PC-3 (cell line): ENCODE measurements at regions of chr15 and their contacts with region 1.

Region 1: GRCh38 chr15:70505411-70505919 is 257.9 kb downstream of the UACA start:
- DNase-seq: peak; percentile 95
- ATAC-seq: peak; percentile 56
- H3K4me3 ChIP-seq: no peak overlapping the region
- H3K27ac ChIP-seq: peak overlapping the region; percentile 90
- H3K4me1 ChIP-seq: peaks cover 57% of the 10 kb centered on the region
- H3K27me3 ChIP-seq: no peaks in the 10 kb centered on the region
- CTCF ChIP-seq: no peak

Region 2: GRCh38 chr15:70474471-70475396 is 30.7 kb before region 1 on chr15:
- CTCF ChIA-PET with region 1: no interaction called
- POLR2A ChIA-PET with region 1: no interaction called
- intact Hi-C with region 1: loop called (anchors 2 kb)
- DNase-seq: peak; percentile 94
- ATAC-seq: peak; percentile 85
- H3K4me3 ChIP-seq: peak overlapping the region; percentile 55
- H3K27ac ChIP-seq: peak overlapping the region; percentile 93
- H3K4me1 ChIP-seq: peaks cover 30% of the 10 kb centered on the region
- H3K27me3 ChIP-seq: no peaks in the 10 kb centered on the region
- CTCF ChIP-seq: no peak

Region 3: GRCh38 chr15:70492240-70493177 is 13.0 kb before region 1 on chr15:
- CTCF ChIA-PET with region 1: interaction called, 12 read pairs
- POLR2A ChIA-PET with region 1: interaction called, 3 read pairs
- intact Hi-C with region 1: loop called (anchors 1 kb)
- DNase-seq: peak; percentile 88
- ATAC-seq: peak; percentile 70
- H3K4me3 ChIP-seq: peak overlapping the region; percentile 32; the same call in 1 of the 2 replicates
- H3K27ac ChIP-seq: peak overlapping the region; percentile 92
- H3K4me1 ChIP-seq: peaks cover 49% of the 10 kb centered on the region
- H3K27me3 ChIP-seq: no peaks in the 10 kb centered on the region
- CTCF ChIP-seq: no peak

Region 4: GRCh38 chr15:70605606-70606410 is 100.3 kb after region 1 on chr15:
- CTCF ChIA-PET with region 1: no interaction called
- POLR2A ChIA-PET with region 1: no interaction called
- intact Hi-C with region 1: no loop called
- DNase-seq: peak; percentile 32
- ATAC-seq: peak; percentile 33; the same call in 1 of the 2 replicates
- H3K4me3 ChIP-seq: no peak overlapping the region
- H3K27ac ChIP-seq: no peak overlapping the region
- H3K4me1 ChIP-seq: peaks cover 12% of the 10 kb centered on the region
- H3K27me3 ChIP-seq: no peaks in the 10 kb centered on the region
- CTCF ChIP-seq: no peak